ENCODE measurements at regions of chr16 and their contacts with region 1.

Region 1: DNA sequence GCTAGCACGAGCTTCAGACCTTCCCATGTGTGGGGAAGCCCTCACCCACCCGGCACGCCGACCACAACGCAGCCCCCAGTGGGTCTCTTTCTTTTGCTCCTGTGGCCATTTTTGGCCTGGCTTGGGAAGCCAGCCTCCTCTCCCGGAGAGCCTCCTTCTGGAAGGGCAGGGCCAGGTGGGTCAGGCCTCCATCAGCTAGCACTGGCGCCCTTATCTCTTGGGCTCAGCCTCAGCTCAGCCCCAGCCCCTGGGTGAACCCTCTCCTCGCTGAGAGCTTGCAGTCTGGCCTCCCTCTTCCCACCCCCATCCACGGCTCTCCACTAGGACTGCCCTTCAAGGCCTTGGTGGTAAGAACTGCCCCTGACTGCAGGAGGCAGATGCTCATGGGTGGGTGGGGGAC is 14.7 kb upstream of the JPH3 start:
- DNase-seq: no peak
- ATAC-seq: no peak
- H3K4me3 ChIP-seq: no peak overlapping the region
- H3K27ac ChIP-seq: no peak overlapping the region
- H3K4me1 ChIP-seq: peaks cover 15% of the 10 kb centered on the region
- H3K27me3 ChIP-seq: peaks cover 36% of the 10 kb centered on the region
- CTCF ChIP-seq: no peak
- POLR2A ChIP-seq: no peak
- RAD21 ChIP-seq: no peak

Region 2: GRCh38 chr16:87461466-87461991 is 126.1 kb before region 1 on chr16:
- CTCF ChIA-PET with region 1: no interaction called
- POLR2A ChIA-PET with region 1: no interaction called
- dilution Hi-C with region 1: no loop called
- in situ Hi-C with region 1: no loop called
- intact Hi-C with region 1: no loop called
- DNase-seq: no peak
- ATAC-seq: no peak
- H3K4me3 ChIP-seq: no peak overlapping the region
- H3K27ac ChIP-seq: no peak overlapping the region
- H3K4me1 ChIP-seq: peaks cover 33% of the 10 kb centered on the region
- H3K27me3 ChIP-seq: no peaks in the 10 kb centered on the region
- CTCF ChIP-seq: no peak
- POLR2A ChIP-seq: no peak
- RAD21 ChIP-seq: no peak

Region 3: GRCh38 chr16:87702325-87702811 is 114.7 kb after region 1 on chr16:
- CTCF ChIA-PET with region 1: no interaction called
- POLR2A ChIA-PET with region 1: no interaction called
- dilution Hi-C with region 1: no loop called
- in situ Hi-C with region 1: no loop called
- intact Hi-C with region 1: loop called (anchors 1 kb)
- DNase-seq: peak; percentile 30
- ATAC-seq: peak; percentile 88
- H3K4me3 ChIP-seq: no peak overlapping the region
- H3K27ac ChIP-seq: no peak overlapping the region
- H3K4me1 ChIP-seq: no peaks in the 10 kb centered on the region
- H3K27me3 ChIP-seq: no peaks in the 10 kb centered on the region
- CTCF ChIP-seq: peak; percentile 55
- POLR2A ChIP-seq: no peak
- RAD21 ChIP-seq: peak; percentile 52

Region 4: GRCh38 chr16:87778830-87779579 is 191.4 kb after region 1 on chr16:
- CTCF ChIA-PET with region 1: no interaction called
- POLR2A ChIA-PET with region 1: no interaction called
- dilution Hi-C with region 1: no loop called
- in situ Hi-C with region 1: no loop called
- intact Hi-C with region 1: no loop called
- DNase-seq: peak; percentile 96
- ATAC-seq: peak; percentile 87
- H3K4me3 ChIP-seq: no peak overlapping the region
- H3K27ac ChIP-seq: peak overlapping the region; percentile 88
- H3K4me1 ChIP-seq: peaks cover 9% of the 10 kb centered on the region
- H3K27me3 ChIP-seq: no peaks in the 10 kb centered on the region
- CTCF ChIP-seq: peak; percentile 99
- POLR2A ChIP-seq: no peak
- RAD21 ChIP-seq: peak; percentile 99